Heart right ventricle (tissue), 16 donors: ENCODE measurements at regions of chr20 and their contacts with region 1.

Region 1: GRCh38 chr20:59571551-59572314 is 32.6 kb upstream of the PHACTR3 start:
- DNase-seq: peak; percentile 54 to 66
- ATAC-seq: peak; percentile 54 to 75 (median 69)
- H3K4me3 ChIP-seq: peak overlapping the region in 9 of 10 donors; percentile 22 to 59 (median 47)
- H3K27ac ChIP-seq: peak overlapping the region in 5 of 10 donors; percentile 19 to 65 (median 45)
- H3K4me1 ChIP-seq: peaks cover 0 to 11% (median 5%) of the 10 kb centered on the region in 9 donors
- H3K27me3 ChIP-seq: peaks cover 0 to 59% (median 28%) of the 10 kb centered on the region in 7 donors
- CTCF ChIP-seq: peak; percentile 93 to 97 (median 95)

Region 2: GRCh38 chr20:59583428-59584045 is 11.8 kb after region 1 on chr20:
- intact Hi-C with region 1: loop called in 1 of 10 experiments (anchors 1 kb)
- DNase-seq: peak; percentile 75 to 86
- ATAC-seq: peak; percentile 64 to 83 (median 78)
- H3K4me3 ChIP-seq: no peak overlapping the region
- H3K27ac ChIP-seq: peak overlapping the region in 4 of 10 donors; percentile 9 to 73 (median 50)
- H3K4me1 ChIP-seq: peaks cover 0 to 31% (median 13%) of the 10 kb centered on the region in 9 donors
- H3K27me3 ChIP-seq: peaks cover 0 to 18% (median 11%) of the 10 kb centered on the region in 7 donors
- CTCF ChIP-seq: no peak

Region 3: GRCh38 chr20:59751056-59751688 is 179.4 kb after region 1 on chr20:
- intact Hi-C with region 1: loop called in 8 of 10 experiments (anchors 1 to 5 kb)
- DNase-seq: peak; percentile 63 to 78
- ATAC-seq: peak; percentile 61 to 87 (median 80)
- H3K4me3 ChIP-seq: no peak overlapping the region
- H3K27ac ChIP-seq: peak overlapping the region in 2 of 10 donors; percentile 79 to 82
- H3K4me1 ChIP-seq: peaks cover 0 to 42% (median 29%) of the 10 kb centered on the region in 9 donors
- H3K27me3 ChIP-seq: peaks cover 0 to 71% (median 23%) of the 10 kb centered on the region in 7 donors
- CTCF ChIP-seq: peak; percentile 51 to 87 (median 79)

Region 4: DNA sequence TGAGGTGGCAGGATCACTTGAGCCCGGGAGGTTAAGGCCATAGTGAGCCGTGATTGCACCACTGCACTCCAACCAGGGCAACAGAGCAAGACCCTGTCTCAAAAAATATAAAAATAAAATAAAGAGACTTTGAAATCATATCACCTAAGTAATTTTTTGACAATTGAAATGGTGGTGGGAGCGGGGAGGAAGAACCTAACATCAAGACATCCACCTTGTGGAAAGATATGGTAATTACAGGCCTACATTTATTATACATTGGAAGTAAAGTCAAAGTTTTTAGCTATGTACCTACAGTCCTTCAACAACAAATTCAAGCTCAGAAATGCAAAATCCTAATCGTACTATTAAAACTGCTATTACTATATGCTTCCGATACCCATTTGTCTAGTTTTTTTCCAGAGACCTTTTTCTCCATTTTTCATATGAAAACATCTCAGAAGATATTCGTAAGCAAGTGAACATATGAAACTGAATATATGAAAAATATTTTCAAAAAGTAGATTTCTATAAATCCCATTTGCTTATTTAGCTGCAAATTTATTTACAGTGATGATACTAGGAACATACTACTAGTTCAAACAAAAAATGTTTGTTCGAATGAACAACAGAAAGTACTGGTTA is 278.4 kb after region 1 on chr20:
- intact Hi-C with region 1: loop called in 2 of 10 experiments (anchors 10 kb)
- DNase-seq: no peak
- ATAC-seq: peak in 1 of 8 donors; percentile 39
- H3K4me3 ChIP-seq: no peak overlapping the region
- H3K27ac ChIP-seq: no peak overlapping the region
- H3K4me1 ChIP-seq: no peaks in the 10 kb centered on the region
- H3K27me3 ChIP-seq: no peaks in the 10 kb centered on the region
- CTCF ChIP-seq: peak; percentile 48 to 78 (median 71)